ENCODE measurements at regions of chr3 and their contacts with region 1.

Region 1: DNA sequence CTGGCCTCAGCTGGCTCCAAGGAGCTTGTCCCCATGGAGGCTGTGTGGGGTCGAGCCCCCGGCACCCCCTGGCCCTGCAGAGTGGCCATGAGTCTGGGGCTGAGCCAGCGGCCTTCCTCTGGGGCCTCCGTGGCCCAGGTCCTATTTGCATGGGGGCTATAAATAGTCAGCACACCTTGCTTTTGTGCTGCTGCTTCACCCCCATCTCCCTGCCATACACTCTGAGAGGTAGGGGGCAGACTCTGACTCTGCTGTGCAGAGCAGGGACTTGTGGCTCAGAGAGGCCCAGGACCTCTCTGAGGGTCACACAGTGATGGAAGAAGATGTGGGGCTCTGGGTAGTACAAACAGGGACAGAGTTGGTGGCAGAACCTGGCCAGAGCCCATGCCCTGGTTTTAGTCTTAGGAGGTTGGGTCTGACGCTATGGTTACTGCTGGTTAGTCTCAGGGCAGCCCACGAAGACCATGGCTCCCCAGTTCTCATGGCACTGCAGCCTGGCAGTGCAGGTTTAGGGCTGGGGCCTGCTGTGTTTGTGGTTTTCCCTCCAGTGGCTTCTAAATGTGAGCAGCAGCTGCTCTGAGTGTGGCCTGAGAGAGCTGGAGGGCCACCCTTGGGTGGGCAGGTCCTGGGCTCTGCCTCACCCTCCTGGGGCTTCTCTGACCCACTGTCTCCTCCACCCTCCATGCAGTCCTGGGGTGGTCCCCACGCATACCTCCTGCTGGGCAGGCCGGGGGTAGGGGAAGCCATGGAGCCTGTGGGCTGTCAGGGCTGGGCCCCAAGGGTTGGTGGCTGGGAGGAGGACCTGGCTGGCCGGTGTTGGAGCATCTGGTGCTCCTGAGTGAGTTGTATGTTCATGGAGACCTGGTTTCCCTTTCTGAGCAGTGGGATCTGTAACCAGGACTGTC is 13.6 kb downstream of the PRKCD start:
- DNase-seq: no peak
- ATAC-seq: no peak
- H3K4me3 ChIP-seq: no peak overlapping the region
- H3K27ac ChIP-seq: no peak overlapping the region
- H3K4me1 ChIP-seq: peaks cover 0 to 49% (median 0%) of the 10 kb centered on the region in 9 donors
- H3K27me3 ChIP-seq: no peaks in the 10 kb centered on the region
- CTCF ChIP-seq: no peak

Region 2: DNA sequence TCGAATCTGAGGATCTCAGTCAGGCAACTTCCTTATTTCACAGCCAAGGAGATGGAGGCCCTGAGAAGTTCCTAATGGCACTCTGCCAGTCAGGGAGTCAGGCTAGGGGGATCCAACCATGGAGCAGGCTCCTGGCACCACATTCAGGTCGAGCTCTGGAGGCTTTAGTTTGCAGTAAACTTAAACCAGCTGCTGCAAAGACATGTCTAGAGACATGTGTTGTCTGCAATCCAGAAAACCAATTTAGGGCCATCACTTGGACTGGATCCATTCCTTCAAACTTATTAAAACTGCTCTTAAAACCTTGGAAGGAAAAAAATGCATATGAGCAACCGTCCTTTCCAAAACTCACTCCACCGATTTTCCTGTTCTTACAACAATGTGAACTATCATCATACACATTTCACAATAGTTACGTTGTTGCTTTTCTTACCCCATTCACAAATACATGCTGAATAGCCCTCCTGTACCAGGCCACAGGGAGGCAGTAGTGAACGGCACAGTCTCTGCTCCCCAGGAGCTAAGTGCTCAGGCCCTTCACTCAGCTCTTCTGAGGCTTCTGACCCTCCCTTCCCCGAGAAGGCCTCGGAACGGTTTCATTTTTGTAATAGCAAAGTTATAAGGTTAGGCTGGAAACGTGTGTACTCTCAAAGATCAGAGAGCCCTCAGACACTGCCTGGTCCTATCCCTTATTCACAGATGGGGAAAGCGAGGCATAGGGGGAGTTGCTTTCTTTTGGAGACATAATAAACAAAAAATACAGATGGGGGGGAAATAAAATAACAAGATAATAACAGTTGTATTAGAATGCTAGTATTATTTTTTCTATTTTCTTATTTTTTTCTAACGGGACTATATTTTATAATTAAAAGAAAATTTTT is 64.5 kb before region 1 on chr3:
- intact Hi-C with region 1: no loop called
- DNase-seq: no peak
- ATAC-seq: peak in 4 of 8 donors; percentile 37 to 79 (median 49)
- H3K4me3 ChIP-seq: no peak overlapping the region
- H3K27ac ChIP-seq: peak overlapping the region in 3 of 10 donors; percentile 30 to 64 (median 42)
- H3K4me1 ChIP-seq: peaks cover 0 to 36% (median 12%) of the 10 kb centered on the region in 9 donors
- H3K27me3 ChIP-seq: no peaks in the 10 kb centered on the region
- CTCF ChIP-seq: peak in 8 of 9 donors; percentile 17 to 61 (median 48)

Region 3: GRCh38 chr3:53140847-53141845 is 33.5 kb before region 1 on chr3:
- intact Hi-C with region 1: loop called in 1 of 10 experiments (anchors 5 kb)
- DNase-seq: no peak
- ATAC-seq: peak in 6 of 8 donors; percentile 8 to 62 (median 35)
- H3K4me3 ChIP-seq: no peak overlapping the region
- H3K27ac ChIP-seq: peak overlapping the region in 1 of 10 donors; percentile 31
- H3K4me1 ChIP-seq: peaks cover 0 to 41% (median 10%) of the 10 kb centered on the region in 9 donors
- H3K27me3 ChIP-seq: no peaks in the 10 kb centered on the region
- CTCF ChIP-seq: no peak

Region 4: GRCh38 chr3:53219895-53220483 is 45.4 kb after region 1 on chr3:
- intact Hi-C with region 1: no loop called
- DNase-seq: peak; percentile 74 to 84
- ATAC-seq: peak; percentile 64 to 86 (median 78)
- H3K4me3 ChIP-seq: no peak overlapping the region
- H3K27ac ChIP-seq: no peak overlapping the region
- H3K4me1 ChIP-seq: peaks cover 0 to 21% (median 0%) of the 10 kb centered on the region in 9 donors
- H3K27me3 ChIP-seq: peaks cover 0 to 7% (median 0%) of the 10 kb centered on the region in 7 donors
- CTCF ChIP-seq: peak; percentile 63 to 97 (median 86)